Colonic mucosa (tissue), 4 donors: ENCODE measurements at regions of chr6 and their contacts with region 1.

Region 1: GRCh38 chr6:46419576-46420002 is 71.7 kb downstream of the RCAN2 start:
- DNase-seq: peak; percentile 72
- H3K4me3 ChIP-seq: no peak overlapping the region
- H3K27ac ChIP-seq: no peak overlapping the region
- H3K4me1 ChIP-seq: no peaks in the 10 kb centered on the region
- H3K27me3 ChIP-seq: no peaks in the 10 kb centered on the region
- CTCF ChIP-seq: peak; percentile 81

Region 2: GRCh38 chr6:46491628-46492547 is 72.3 kb after region 1 on chr6:
- intact Hi-C with region 1: loop called (anchors 5 kb)
- DNase-seq: peak; percentile 50
- H3K4me3 ChIP-seq: peak overlapping the region; percentile 38
- H3K27ac ChIP-seq: peak overlapping the region; percentile 5
- H3K4me1 ChIP-seq: no peaks in the 10 kb centered on the region
- H3K27me3 ChIP-seq: peaks cover 13% of the 10 kb centered on the region
- CTCF ChIP-seq: peak; percentile 58

Region 3: GRCh38 chr6:46510651-46511050 is 91.1 kb after region 1 on chr6:
- intact Hi-C with region 1: no loop called
- DNase-seq: no peak
- H3K4me3 ChIP-seq: no peak overlapping the region
- H3K27ac ChIP-seq: no peak overlapping the region
- H3K4me1 ChIP-seq: peaks cover 3% of the 10 kb centered on the region
- H3K27me3 ChIP-seq: no peaks in the 10 kb centered on the region
- CTCF ChIP-seq: no peak

Region 4: DNA sequence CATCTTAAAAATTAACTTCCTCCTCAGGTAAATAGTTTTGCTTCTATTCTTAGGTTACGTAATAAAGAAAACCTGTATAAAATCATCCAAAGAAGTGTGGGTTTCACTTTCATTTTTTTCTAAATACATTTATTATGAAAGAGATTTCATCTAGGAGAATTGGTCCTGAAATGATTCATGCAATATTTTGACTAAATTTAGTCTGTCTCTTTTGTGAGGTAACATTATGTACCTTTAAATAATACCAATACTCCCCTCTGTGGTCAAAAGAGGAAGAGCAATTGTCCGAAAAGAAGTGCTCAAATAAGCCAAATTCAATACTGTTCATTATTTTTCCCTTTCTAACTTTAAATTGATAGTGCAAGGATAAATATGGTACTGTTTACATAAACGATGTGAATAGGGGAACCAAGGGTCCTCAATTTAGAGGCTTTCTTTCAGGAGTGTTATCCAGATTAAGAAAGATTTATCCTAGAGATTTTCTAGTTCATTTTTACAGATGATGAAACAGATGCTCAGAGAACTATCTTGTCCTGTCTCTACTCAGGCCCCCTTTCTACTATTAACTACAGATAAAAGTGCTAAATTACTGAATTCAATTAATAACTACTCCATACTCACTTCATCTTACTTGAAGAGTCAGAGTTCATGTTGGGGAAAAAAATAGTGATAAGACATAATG is 206.8 kb after region 1 on chr6:
- intact Hi-C with region 1: loop called (anchors 2 kb)
- DNase-seq: no peak
- H3K4me3 ChIP-seq: no peak overlapping the region
- H3K27ac ChIP-seq: no peak overlapping the region
- H3K4me1 ChIP-seq: no peaks in the 10 kb centered on the region
- H3K27me3 ChIP-seq: no peaks in the 10 kb centered on the region
- CTCF ChIP-seq: peak; percentile 52

Region 5: GRCh38 chr6:46781478-46782378 is 362.1 kb after region 1 on chr6:
- intact Hi-C with region 1: loop called (anchors 5 kb)
- DNase-seq: peak; percentile 75
- H3K4me3 ChIP-seq: no peak overlapping the region
- H3K27ac ChIP-seq: no peak overlapping the region
- H3K4me1 ChIP-seq: no peaks in the 10 kb centered on the region
- H3K27me3 ChIP-seq: no peaks in the 10 kb centered on the region
- CTCF ChIP-seq: peak; percentile 54

Region 6: DNA sequence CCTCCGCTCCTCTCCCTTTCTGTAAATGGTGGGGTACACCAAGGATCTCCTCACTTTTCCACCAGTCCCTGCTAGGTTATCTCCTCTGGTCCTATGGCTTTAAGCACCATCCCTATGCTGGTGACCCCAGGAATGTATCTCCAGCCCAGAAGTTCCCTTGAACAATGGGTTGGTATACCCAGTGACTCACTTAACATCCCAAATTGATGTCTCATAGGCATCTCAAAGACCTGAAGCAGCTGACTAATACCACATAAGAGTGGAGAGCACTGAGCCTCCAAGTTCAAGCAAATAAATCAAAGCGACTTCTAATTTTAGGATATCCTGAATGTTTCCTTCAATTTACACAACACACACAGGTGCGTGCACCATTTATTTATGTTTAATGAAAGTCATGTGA is 574.3 kb after region 1 on chr6:
- intact Hi-C with region 1: loop called (anchors 10 kb)
- DNase-seq: no peak
- H3K4me3 ChIP-seq: no peak overlapping the region
- H3K27ac ChIP-seq: no peak overlapping the region
- H3K4me1 ChIP-seq: no peaks in the 10 kb centered on the region
- H3K27me3 ChIP-seq: no peaks in the 10 kb centered on the region
- CTCF ChIP-seq: no peak